BJ (cell line): ENCODE measurements at regions of chr5 and their contacts with region 1.

Region 1: DNA sequence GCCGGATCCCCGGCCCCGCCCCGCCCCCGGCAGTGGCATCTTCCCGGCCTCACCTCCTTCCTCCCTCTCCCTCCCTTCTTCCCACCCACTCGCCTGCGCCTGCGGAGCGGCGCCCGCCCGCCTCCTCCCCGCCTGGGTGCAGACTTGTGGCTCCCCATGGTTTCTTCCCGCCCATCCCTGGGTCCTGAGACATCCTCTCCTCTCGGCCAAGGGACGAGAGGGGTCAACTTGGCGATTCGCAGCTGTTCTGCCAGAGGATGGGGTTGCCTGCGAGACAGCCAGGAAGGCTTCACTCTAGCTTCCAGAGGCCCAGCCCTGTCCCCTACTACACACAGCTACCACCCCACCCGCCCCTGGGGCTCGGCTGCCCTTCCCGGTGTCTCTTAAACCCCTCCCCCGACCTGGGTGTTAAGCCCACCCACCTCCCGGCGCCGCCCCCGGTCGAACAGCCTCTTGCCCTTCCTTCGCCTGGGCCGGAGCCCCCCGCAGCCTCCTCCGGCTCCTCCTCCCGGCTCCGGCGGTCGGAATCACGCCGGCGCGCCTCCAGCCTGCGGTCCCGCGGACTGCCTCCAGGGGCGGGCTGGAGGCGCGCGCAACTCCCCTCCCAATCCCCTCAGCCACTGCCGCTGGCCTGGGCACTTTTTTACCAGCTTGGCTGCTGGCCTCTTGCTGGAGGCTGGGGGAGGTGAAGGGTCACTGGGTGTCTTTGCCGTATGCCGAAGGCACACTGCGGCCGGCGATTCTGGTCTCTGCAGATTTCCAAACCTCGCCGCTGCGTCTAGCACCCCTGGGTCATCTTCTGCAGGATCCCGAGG is 1.9 kb downstream of the JADE2 start:
- DNase-seq: peak; percentile 52
- H3K4me3 ChIP-seq: peak overlapping the region; percentile 84
- H3K27me3 ChIP-seq: no peaks in the 10 kb centered on the region
- CTCF ChIP-seq: peak; percentile 72

Region 2: DNA sequence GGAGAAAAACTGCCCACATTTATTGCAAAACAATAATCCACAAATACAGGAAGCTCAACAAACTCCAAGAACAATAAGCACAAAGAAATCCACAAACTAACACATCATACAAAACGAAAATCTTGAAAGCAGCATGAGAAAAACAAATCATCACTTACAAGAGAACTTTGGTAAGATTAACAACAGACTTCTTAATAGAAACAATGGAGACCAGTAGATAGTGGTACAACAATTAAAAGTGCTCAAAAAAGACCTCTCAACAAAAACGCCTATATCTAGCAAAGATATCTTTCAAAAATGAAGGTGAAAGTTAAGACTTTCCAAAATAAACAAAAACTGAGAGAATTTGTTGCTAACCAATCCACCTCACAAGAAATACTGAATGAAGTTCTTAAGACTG is 198.7 kb before region 1 on chr5:
- CTCF ChIA-PET with region 1: no interaction called
- POLR2A ChIA-PET with region 1: interaction called, 11 read pairs
- DNase-seq: no peak
- H3K4me3 ChIP-seq: no peak overlapping the region
- H3K27me3 ChIP-seq: no peaks in the 10 kb centered on the region
- CTCF ChIP-seq: no peak

Region 3: GRCh38 chr5:134543820-134544614 is 16.7 kb after region 1 on chr5:
- CTCF ChIA-PET with region 1: interaction called, 26 read pairs
- POLR2A ChIA-PET with region 1: no interaction called
- DNase-seq: no peak
- H3K4me3 ChIP-seq: no peak overlapping the region
- H3K27me3 ChIP-seq: no peaks in the 10 kb centered on the region
- CTCF ChIP-seq: no peak